ENCODE measurements at regions of chr3 and their contacts with region 1.

Region 1: GRCh38 chr3:18988614-18989229 is 159.6 kb upstream of the KCNH8 start:
- DNase-seq: peak; percentile 24
- H3K4me3 ChIP-seq: no peak overlapping the region
- H3K27ac ChIP-seq: no peak overlapping the region
- H3K4me1 ChIP-seq: no peaks in the 10 kb centered on the region
- H3K27me3 ChIP-seq: peaks cover 4% of the 10 kb centered on the region
- CTCF ChIP-seq: peak; percentile 53

Region 2: GRCh38 chr3:18847583-18848197 is 141.0 kb before region 1 on chr3:
- CTCF ChIA-PET with region 1: interaction called, 7 read pairs
- POLR2A ChIA-PET with region 1: no interaction called
- intact Hi-C with region 1: loop called (anchors 5 kb)
- DNase-seq: peak; percentile 30
- H3K4me3 ChIP-seq: no peak overlapping the region
- H3K27ac ChIP-seq: no peak overlapping the region
- H3K4me1 ChIP-seq: no peaks in the 10 kb centered on the region
- H3K27me3 ChIP-seq: no peaks in the 10 kb centered on the region
- CTCF ChIP-seq: peak; percentile 48

Measured in A673 (cell line).